Activated naive CD4-positive, alpha-beta T cell treated with anti-CD3 and anti-CD28 coated beads for 36 hours (primary cell): ENCODE measurements at regions of chr20 and their contacts with region 1.

Region 1: GRCh38 chr20:53708129-53708968 is 114.7 kb upstream of the ZNF217 start:
- DNase-seq: peak; percentile 58
- H3K4me3 Mint-ChIP-seq: peak overlapping the region; percentile 64
- H3K27ac Mint-ChIP-seq: peak overlapping the region; percentile 90
- H3K4me1 Mint-ChIP-seq: peaks cover 53% of the 10 kb centered on the region
- H3K27me3 Mint-ChIP-seq: no peaks in the 10 kb centered on the region

Region 2: GRCh38 chr20:53623454-53624211 is 84.7 kb before region 1 on chr20:
- CTCF ChIA-PET with region 1: no interaction called
- intact Hi-C with region 1: loop called (anchors 1 kb)
- DNase-seq: peak; percentile 65
- H3K4me3 Mint-ChIP-seq: peak overlapping the region; percentile 74
- H3K27ac Mint-ChIP-seq: peak overlapping the region; percentile 92
- H3K4me1 Mint-ChIP-seq: peaks cover 40% of the 10 kb centered on the region
- H3K27me3 Mint-ChIP-seq: no peaks in the 10 kb centered on the region

Region 3: DNA sequence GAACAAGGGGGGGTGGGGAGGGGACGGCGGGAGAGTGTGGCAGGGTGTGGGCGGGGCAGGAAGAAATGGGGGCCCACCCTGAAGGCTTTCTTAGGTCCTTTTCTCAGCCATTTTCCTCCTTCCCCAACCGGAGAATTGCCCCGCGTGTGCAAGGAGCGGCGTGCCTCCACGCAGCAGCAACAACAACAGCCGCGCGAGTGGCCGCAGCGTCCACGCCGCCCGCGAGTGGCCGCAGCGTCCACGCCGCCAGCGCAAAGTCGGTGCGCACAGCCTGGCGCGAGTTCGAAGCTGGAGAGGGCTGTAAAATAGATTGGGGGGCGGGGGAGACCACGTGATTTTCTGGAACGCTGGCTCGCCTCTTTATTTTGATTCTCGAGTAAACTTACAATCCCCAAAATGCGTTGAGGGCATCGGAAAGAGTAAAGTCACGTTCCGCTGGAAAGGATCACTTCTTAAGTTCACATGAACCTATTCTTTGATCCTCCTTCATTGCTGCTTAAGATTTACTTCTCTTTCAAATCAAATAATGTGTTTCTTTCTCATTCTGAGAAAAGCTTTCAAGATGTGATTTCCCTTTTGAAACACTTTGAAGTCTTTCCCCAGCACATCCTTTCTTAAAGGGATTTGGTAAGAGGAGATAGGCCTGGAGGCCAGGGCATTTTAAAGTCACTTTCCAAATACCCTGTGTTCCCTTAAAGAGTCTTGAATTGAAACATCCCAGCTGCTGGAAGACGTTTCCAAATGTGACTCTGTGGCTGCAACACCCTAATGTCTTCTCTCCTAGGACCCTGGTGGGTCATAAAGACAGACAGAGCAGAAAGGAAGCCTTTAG is 48.1 kb before region 1 on chr20:
- CTCF ChIA-PET with region 1: interaction called, 5 read pairs
- intact Hi-C with region 1: loop called (anchors 1 kb)
- DNase-seq: peak; percentile 56
- H3K4me3 Mint-ChIP-seq: peak overlapping the region; percentile 77
- H3K27ac Mint-ChIP-seq: peak overlapping the region; percentile 88
- H3K4me1 Mint-ChIP-seq: peaks cover 61% of the 10 kb centered on the region
- H3K27me3 Mint-ChIP-seq: no peaks in the 10 kb centered on the region

Region 4: GRCh38 chr20:53738039-53738944 is 29.9 kb after region 1 on chr20:
- CTCF ChIA-PET with region 1: interaction called, 6 read pairs
- intact Hi-C with region 1: loop called (anchors 1 kb)
- DNase-seq: no peak
- H3K4me3 Mint-ChIP-seq: no peak overlapping the region
- H3K27ac Mint-ChIP-seq: no peak overlapping the region
- H3K4me1 Mint-ChIP-seq: peaks cover 54% of the 10 kb centered on the region
- H3K27me3 Mint-ChIP-seq: no peaks in the 10 kb centered on the region

Region 5: GRCh38 chr20:53869466-53870258 is 161.3 kb after region 1 on chr20:
- CTCF ChIA-PET with region 1: interaction called, 5 read pairs
- intact Hi-C with region 1: loop called (anchors 1 kb)
- DNase-seq: peak; percentile 85
- H3K4me3 Mint-ChIP-seq: peak overlapping the region; percentile 57
- H3K27ac Mint-ChIP-seq: peak overlapping the region; percentile 90
- H3K4me1 Mint-ChIP-seq: peaks cover 67% of the 10 kb centered on the region
- H3K27me3 Mint-ChIP-seq: no peaks in the 10 kb centered on the region